ENCODE measurements at regions of chr3 and their contacts with region 1.

Region 1: DNA sequence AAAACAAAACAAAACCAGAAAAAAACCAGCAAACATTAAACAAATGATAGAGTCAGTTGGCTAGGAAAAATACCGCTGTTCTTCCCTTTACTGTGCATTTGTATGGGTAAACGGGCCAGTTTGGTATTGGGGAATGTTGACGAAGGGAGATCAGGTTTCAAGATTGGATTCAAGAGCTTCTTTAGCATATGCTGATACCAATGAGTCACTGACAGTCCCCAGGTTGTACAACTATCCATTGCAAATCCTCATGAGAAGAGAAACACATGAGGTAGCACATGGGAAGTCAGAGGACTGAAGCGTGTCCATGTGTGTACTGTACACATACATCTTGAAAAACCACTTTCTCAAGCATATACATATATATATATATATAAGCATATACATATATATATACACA is 25.6 kb downstream of the TIGIT start:
- DNase-seq: no peak
- H3K4me3 Mint-ChIP-seq: no peak overlapping the region
- H3K27ac Mint-ChIP-seq: no peak overlapping the region
- H3K4me1 Mint-ChIP-seq: peaks cover 85% of the 10 kb centered on the region
- H3K27me3 Mint-ChIP-seq: no peaks in the 10 kb centered on the region

Region 2: DNA sequence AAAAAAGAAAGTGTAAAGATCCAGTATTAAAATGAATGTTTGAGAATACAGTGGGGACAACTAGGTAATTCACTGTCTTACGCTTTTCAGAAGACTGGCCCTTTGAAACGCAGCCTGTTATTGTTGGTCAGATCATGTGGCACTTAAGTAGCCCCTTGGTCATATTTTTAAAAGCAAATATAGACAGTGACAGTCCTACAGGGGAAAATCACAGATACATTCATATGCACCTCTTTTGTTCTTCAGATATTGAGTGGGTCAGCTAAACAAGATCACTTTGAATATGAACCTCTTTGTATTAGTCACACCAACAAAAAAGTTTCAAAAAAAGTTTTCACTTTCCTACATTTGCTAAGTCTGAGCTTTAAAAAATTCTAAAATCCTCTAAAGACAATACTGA is 10.4 kb after region 1 on chr3:
- CTCF ChIA-PET with region 1: interaction called, 3 read pairs
- POLR2A ChIA-PET with region 1: interaction called, 3 read pairs
- intact Hi-C with region 1: loop called (anchors 1 kb)
- DNase-seq: no peak
- H3K4me3 Mint-ChIP-seq: peak overlapping the region; percentile 35
- H3K27ac Mint-ChIP-seq: peak overlapping the region; percentile 84
- H3K4me1 Mint-ChIP-seq: peaks cover 91% of the 10 kb centered on the region
- H3K27me3 Mint-ChIP-seq: no peaks in the 10 kb centered on the region

Region 3: GRCh38 chr3:114356066-114356465 is 36.6 kb after region 1 on chr3:
- CTCF ChIA-PET with region 1: no interaction called
- POLR2A ChIA-PET with region 1: no interaction called
- intact Hi-C with region 1: no loop called
- DNase-seq: no peak
- H3K4me3 Mint-ChIP-seq: no peak overlapping the region
- H3K27ac Mint-ChIP-seq: no peak overlapping the region
- H3K4me1 Mint-ChIP-seq: peaks cover under 1% of the 10 kb centered on the region
- H3K27me3 Mint-ChIP-seq: no peaks in the 10 kb centered on the region